GM10248 (cell line): ENCODE measurements at regions of chr11 and their contacts with region 1.

Region 1: DNA sequence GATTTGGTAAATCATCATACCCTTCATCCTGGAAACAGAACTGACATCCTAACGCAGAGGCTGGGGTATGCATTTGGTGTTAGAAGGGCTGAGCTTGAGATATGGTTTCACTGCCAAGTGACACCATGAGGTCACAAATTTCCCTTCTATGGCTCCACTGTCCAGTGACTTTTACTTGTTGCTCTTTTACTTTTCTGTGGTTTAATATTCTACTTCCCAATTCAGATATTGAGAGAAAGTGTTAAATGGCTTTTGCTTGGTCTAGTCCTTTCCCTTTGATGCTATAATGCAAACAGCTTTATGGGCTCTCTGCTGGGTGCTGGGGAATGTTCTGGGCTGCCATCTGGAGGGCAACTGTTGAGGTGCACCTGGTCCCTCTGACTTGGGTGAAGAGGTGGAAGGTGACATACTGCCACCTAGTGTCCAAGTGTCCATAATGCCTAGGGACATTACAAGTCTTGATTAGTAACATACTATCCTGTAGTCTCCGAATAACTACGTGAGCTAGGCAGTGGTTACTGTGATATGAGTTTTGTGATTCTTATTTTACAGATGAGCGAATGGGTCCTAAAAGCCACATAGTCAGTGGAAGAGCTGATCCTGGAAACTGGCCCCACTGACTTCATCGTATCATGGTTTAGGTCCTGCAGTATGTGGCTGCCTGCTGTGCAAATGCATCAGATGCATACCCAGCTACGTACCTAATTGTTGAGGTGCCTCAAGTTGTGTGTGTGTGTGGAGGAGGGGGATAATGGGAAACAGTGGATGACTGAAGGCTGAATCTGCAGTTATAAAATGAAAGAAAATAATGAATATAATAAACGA is 149.1 kb upstream of the RAG2 start:
- DNase-seq: peak; percentile 71
- CTCF ChIP-seq: peak; percentile 98

Region 2: DNA sequence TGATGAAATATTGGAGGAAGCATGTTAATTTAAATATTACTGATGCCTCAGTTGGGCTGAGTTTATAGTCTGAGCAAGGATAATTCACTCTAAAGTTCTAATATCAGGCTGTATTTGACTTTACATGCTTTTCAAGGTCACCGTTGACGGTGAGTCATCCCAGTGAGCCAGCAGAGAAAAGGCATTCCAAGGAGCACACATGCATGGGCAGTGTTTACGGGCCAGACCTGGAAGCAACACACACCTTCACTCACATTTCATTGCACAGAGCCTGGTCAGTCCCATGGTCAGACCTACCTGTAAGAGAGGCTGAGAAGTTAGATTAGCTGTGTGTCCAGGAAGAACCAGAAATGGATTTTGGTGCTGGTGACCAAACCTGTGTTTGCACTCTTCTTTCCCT is 511.3 kb before region 1 on chr11:
- CTCF ChIA-PET with region 1: no interaction called
- POLR2A ChIA-PET with region 1: no interaction called
- DNase-seq: no peak
- CTCF ChIP-seq: no peak

Region 3: GRCh38 chr11:36289226-36289852 is 457.8 kb before region 1 on chr11 and contains the start of gene COMMD9:
- CTCF ChIA-PET with region 1: interaction called, 21 read pairs
- POLR2A ChIA-PET with region 1: no interaction called
- DNase-seq: peak; percentile 94
- CTCF ChIP-seq: no peak

Region 4: GRCh38 chr11:36500315-36500721 is 246.8 kb before region 1 on chr11:
- CTCF ChIA-PET with region 1: interaction called, 21 read pairs
- POLR2A ChIA-PET with region 1: no interaction called
- DNase-seq: peak; percentile 53
- CTCF ChIP-seq: no peak

Region 5: GRCh38 chr11:36577859-36578258 is 169.2 kb before region 1 on chr11:
- CTCF ChIA-PET with region 1: interaction called, 10 read pairs
- POLR2A ChIA-PET with region 1: no interaction called
- DNase-seq: no peak
- CTCF ChIP-seq: no peak

Region 6: GRCh38 chr11:36693139-36693843 is 53.8 kb before region 1 on chr11:
- CTCF ChIA-PET with region 1: interaction called, 504 read pairs
- POLR2A ChIA-PET with region 1: no interaction called
- DNase-seq: no peak
- CTCF ChIP-seq: no peak

Region 7: DNA sequence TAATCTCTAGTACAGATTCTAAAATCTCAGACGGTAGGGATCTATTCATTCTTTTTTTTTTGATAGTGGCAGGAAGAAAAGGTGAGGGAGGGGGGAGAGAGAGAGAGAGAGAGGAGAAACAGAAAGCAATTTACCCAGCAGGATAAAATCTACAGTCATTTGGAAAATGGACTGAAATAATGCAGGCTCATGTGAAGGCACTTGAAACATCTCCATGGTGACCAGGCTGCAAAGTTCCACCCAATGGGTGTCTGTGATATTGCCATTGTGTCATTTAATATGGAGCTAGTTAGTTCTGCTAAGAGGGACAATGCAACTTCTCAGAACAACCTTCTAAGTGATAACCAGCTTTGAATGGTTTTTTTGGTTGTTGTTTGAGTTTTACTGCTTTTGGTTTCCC is 16.1 kb after region 1 on chr11:
- CTCF ChIA-PET with region 1: interaction called, 94 read pairs
- POLR2A ChIA-PET with region 1: no interaction called
- DNase-seq: no peak
- CTCF ChIP-seq: no peak

Region 8: GRCh38 chr11:36831440-36831839 is 84.3 kb after region 1 on chr11:
- CTCF ChIA-PET with region 1: no interaction called
- POLR2A ChIA-PET with region 1: no interaction called
- DNase-seq: no peak
- CTCF ChIP-seq: no peak